ENCODE measurements at regions of chr15 and their contacts with region 1.

Region 1: DNA sequence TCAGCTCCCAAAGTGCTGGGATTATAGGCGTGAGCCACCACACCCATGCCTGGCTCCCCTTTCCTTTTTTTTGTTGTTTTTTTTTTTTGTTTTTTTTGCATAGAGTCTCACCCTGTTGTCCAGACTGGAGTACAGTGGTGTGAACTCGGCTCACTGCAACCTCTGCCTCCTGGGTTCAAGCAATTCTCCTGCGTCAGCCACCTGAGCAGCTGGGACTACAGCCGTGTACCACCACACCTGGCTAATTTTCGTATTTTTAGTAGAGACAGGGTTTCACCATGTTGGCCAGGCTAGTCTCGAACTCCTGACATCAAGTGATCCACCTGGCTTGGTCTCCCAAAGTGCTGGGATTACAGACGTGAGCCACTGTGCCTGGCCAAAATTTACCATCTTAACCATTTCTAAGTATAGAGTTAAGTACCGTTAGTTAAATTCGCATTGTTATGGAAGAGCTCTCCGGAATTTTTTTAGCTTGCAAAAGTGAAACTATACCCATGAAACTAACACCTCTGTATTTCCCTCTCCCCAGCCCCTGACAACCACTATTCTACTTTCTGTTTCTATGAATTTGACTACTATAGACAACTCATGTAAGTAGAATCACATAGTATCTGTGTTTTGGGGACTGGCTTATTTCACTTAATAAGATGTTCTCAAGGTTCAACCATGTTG is 70.9 kb upstream of the C15orf39 start:
- H3K4me3 Mint-ChIP-seq: peak overlapping the region; percentile 63
- H3K27ac Mint-ChIP-seq: peak overlapping the region; percentile 82
- H3K4me1 Mint-ChIP-seq: peaks cover 54% of the 10 kb centered on the region
- H3K27me3 Mint-ChIP-seq: peaks cover 9% of the 10 kb centered on the region

Region 2: DNA sequence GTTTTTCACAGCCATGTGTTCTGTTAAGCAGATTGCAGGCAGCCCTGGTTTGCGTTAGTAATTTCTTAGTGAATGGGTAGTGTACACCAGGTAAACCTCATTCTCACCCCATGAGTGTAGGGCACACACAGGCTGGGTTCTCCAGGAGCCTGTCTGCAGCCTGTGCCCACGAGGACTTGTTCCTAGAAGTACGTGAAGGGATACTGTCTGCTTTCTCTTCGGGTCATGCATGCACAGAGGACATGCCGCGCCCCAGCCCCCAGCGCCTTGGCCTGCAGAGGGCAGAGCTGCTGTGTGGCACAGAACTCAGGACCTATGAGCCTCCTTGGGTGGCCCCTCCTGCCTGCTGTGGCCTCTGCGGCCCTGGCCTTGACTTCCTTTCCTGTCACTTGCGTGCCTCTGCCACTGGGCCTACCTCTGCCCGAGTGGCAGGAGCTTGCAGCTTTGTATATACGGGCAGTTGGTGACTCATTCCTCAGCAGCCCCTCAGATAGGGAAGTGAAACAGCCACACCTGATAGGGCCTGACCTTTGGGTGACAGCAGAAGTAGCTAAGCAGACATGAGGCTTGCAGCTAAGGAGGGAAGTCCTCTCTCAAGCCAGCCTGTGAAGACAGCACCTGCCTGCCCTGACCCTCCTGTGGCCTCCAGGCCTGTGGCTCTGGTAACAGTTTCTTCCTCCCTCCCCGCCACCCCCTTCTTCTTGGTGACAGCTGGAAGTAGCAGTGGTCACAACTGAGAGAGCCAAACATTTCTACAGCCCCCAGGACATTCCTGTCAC is 87.8 kb before region 1 on chr15:
- intact Hi-C with region 1: loop called (anchors 1 kb)
- H3K4me3 Mint-ChIP-seq: peak overlapping the region; percentile 6
- H3K27ac Mint-ChIP-seq: peak overlapping the region; percentile 85
- H3K4me1 Mint-ChIP-seq: peaks cover 97% of the 10 kb centered on the region
- H3K27me3 Mint-ChIP-seq: no peaks in the 10 kb centered on the region

Region 3: DNA sequence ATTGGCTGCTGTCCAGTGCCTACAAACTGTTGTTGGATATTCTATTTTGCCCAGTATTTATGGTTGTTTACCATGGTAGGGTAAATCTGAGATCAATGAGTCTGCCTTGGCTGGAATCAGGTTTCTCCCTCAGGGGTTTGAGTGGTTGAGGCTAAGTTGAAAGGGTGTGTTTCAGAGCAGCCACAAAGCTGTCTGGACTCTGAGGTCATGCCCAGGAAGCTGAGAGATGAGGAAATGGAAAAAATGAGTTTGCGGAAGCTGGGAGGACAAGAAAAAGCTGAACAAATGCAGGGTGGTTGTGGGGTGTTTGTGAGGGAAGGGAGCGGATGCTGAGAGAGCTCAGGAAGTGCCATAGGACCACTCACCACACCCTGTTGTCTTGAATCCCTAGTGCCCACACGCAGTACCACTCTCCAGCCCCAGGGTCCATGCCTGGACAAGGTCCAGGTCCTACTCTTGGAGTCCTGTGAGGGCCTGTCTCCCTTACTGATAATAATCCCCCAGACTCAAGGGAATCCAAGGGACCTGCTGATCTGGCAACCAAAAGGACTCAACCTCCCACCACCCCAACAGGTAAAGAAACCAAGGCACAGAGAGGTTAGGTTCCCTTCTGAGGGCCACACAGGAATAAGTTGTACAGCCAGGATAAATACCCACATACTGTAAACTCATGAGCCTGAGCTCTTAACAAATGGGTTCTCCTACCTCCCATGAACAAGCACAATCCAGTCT is 25.8 kb before region 1 on chr15:
- intact Hi-C with region 1: loop called (anchors 2 kb)
- H3K4me3 Mint-ChIP-seq: no peak overlapping the region
- H3K27ac Mint-ChIP-seq: peak overlapping the region; percentile 76
- H3K4me1 Mint-ChIP-seq: peaks cover 60% of the 10 kb centered on the region
- H3K27me3 Mint-ChIP-seq: no peaks in the 10 kb centered on the region

Region 4: GRCh38 chr15:76115888-76116885 is 985.5 kb after region 1 on chr15:
- intact Hi-C with region 1: no loop called
- H3K4me3 Mint-ChIP-seq: no peak overlapping the region
- H3K27ac Mint-ChIP-seq: no peak overlapping the region
- H3K4me1 Mint-ChIP-seq: peaks cover 4% of the 10 kb centered on the region
- H3K27me3 Mint-ChIP-seq: no peaks in the 10 kb centered on the region